GM10248 (cell line): ENCODE measurements at regions of chr9 and their contacts with region 1.

Region 1: GRCh38 chr9:112793213-112793810 is 42.8 kb downstream of the SNX30 start:
- DNase-seq: peak; percentile 73
- CTCF ChIP-seq: peak; percentile 81

Region 2: GRCh38 chr9:112050544-112051475 is 742.5 kb before region 1 on chr9:
- CTCF ChIA-PET with region 1: no interaction called
- POLR2A ChIA-PET with region 1: no interaction called
- DNase-seq: no peak
- CTCF ChIP-seq: no peak

Region 3: GRCh38 chr9:112582371-112583262 is 210.7 kb before region 1 on chr9:
- CTCF ChIA-PET with region 1: no interaction called
- POLR2A ChIA-PET with region 1: no interaction called
- DNase-seq: no peak
- CTCF ChIP-seq: no peak

Region 4: GRCh38 chr9:112689161-112689740 is 104.1 kb before region 1 on chr9:
- CTCF ChIA-PET with region 1: no interaction called
- POLR2A ChIA-PET with region 1: no interaction called
- DNase-seq: no peak
- CTCF ChIP-seq: no peak

Region 5: GRCh38 chr9:112774006-112774996 is 19.0 kb before region 1 on chr9:
- CTCF ChIA-PET with region 1: interaction called, 14 read pairs
- POLR2A ChIA-PET with region 1: no interaction called
- DNase-seq: no peak
- CTCF ChIP-seq: no peak

Region 6: DNA sequence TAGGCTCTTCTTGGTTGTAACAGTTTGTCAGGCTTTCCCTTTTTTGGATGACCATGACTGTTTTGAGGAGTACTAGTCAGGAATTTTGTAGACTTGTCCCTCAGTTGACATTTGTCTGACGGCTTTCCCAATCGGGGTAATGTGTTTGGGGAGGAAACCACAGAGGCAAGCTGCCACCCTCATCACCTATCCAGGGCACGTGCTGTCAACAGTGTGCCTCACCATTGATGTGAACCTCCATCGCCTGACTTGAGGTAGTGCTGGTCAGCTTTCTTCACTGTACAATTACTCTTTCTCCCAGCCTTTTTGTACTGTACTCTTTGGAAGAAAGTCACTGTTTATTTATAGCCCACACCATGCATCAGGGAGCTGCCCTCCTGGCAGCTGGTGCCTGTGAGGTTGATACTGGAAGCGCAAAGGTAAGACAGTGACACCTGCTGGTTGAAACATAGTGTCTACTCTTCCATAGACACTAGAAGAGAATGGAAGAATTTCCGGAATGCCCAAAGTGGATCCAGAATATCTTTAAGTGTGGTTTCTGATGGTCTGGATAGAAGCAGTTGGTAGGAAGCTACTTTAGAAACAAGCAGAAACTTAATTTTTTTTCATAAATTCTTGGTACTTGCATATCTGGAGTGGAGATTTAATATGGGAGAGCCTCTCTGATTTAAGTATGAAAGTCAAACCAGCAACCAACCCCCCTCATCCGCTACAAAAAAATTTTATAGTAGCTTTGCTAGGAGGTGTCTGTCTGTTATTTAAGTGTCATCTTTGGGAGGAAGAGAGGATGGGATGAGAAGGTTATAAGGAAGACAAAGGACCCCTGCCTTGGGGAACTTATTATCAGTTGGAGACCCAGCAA is 26.6 kb after region 1 on chr9:
- CTCF ChIA-PET with region 1: no interaction called
- POLR2A ChIA-PET with region 1: no interaction called
- DNase-seq: peak; percentile 50
- CTCF ChIP-seq: peak; percentile 68